Calu3 (cell line): ENCODE measurements at regions of chr5 and their contacts with region 1.

Region 1: GRCh38 chr5:40001796-40002195 is 577.0 kb upstream of the DAB2 start:
- DNase-seq: no peak
- H3K4me3 Mint-ChIP-seq: no peak overlapping the region
- H3K27ac Mint-ChIP-seq: no peak overlapping the region
- H3K4me1 Mint-ChIP-seq: no peaks in the 10 kb centered on the region
- H3K27me3 Mint-ChIP-seq: no peaks in the 10 kb centered on the region
- CTCF ChIP-seq: no peak

Region 2: DNA sequence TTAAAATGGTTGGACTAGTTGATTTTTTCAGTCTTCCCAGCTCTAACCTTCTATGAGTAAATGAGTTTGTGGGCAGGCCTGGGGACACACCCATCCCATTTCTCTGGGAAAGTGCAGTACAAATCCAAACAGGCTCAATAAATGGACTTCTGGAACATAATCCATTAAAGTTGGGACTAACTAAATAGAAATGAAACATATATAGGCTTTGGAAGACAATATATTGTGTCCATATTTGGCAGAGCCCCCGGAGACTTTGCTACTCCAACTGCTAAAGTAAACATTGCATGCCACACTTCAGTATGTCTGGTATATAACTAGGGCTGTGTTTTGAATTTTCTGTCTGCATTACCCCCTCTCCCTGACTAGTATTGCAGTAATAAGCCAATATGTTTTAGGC is 385.7 kb before region 1 on chr5:
- CTCF ChIA-PET with region 1: interaction called, 10 read pairs
- intact Hi-C with region 1: no loop called
- DNase-seq: no peak
- H3K4me3 Mint-ChIP-seq: no peak overlapping the region
- H3K27ac Mint-ChIP-seq: no peak overlapping the region
- H3K4me1 Mint-ChIP-seq: peaks cover 8% of the 10 kb centered on the region
- H3K27me3 Mint-ChIP-seq: no peaks in the 10 kb centered on the region
- CTCF ChIP-seq: no peak

Region 3: GRCh38 chr5:39943811-39944210 is 58.0 kb before region 1 on chr5:
- CTCF ChIA-PET with region 1: no interaction called
- intact Hi-C with region 1: no loop called
- DNase-seq: no peak
- H3K4me3 Mint-ChIP-seq: no peak overlapping the region
- H3K27ac Mint-ChIP-seq: no peak overlapping the region
- H3K4me1 Mint-ChIP-seq: peaks cover 7% of the 10 kb centered on the region
- H3K27me3 Mint-ChIP-seq: no peaks in the 10 kb centered on the region
- CTCF ChIP-seq: no peak

Region 4: GRCh38 chr5:40033411-40033810 is 31.6 kb after region 1 on chr5:
- CTCF ChIA-PET with region 1: no interaction called
- intact Hi-C with region 1: no loop called
- DNase-seq: no peak
- H3K4me3 Mint-ChIP-seq: no peak overlapping the region
- H3K27ac Mint-ChIP-seq: no peak overlapping the region
- H3K4me1 Mint-ChIP-seq: no peaks in the 10 kb centered on the region
- H3K27me3 Mint-ChIP-seq: no peaks in the 10 kb centered on the region
- CTCF ChIP-seq: no peak